Activated CD4-positive, alpha-beta T cell treated with anti-CD3 and anti-CD28 coated beads for 36 hours (primary cell): ENCODE measurements at regions of chr1 and their contacts with region 1.

Region 1: GRCh38 chr1:27872059-27872801 is at the start of gene THEMIS2:
- DNase-seq: peak; percentile 90
- ATAC-seq: peak; percentile 81
- H3K4me3 Mint-ChIP-seq: peak within 1 kb of the TSS; percentile 87
- H3K27ac Mint-ChIP-seq: peak within 1 kb of the TSS; percentile 83
- H3K4me1 Mint-ChIP-seq: peaks cover 36% of the 10 kb centered on the region
- H3K27me3 Mint-ChIP-seq: no peaks in the 10 kb centered on the region
- total RNA-seq, gene THEMIS2: 14.2 to 16.2 TPM

Region 2: DNA sequence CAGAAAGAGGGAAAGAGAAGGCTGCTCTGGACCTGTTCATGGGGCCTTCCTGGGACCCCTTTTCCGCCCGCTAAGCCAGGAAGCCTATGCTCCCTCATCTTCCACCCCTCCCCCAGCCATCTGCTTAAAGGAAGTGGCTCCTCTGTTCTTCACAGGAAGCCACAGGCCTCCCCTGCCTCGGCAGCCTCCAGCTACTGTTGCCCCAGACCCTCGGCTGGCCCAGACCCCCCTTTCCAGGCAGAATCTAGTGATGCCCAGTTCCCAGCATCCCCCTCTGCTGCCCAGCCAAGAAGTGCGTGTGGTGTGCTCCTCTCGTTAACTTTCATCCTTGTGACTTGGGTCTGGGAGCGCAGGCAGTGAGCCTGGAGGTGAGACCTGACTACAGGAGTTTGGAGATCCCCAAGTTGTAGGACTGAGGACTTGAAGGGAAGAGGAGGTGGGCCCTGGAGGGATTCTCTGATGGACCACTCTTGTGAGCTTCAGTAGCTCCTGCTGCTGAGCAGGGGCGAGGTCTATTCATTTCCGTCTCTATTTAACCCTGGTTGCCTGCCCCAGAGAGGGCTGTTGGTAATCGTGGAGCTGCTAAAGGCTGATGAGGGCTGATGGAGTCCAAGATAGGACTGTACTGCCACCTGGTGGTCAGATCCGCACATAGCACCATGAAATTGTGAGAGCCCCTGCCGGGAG is 209.4 kb before region 1 on chr1:
- CTCF ChIA-PET with region 1: no interaction called
- POLR2A ChIA-PET with region 1: no interaction called
- intact Hi-C with region 1: no loop called
- DNase-seq: peak; percentile 94
- ATAC-seq: peak; percentile 84
- H3K4me3 Mint-ChIP-seq: peak overlapping the region; percentile 70
- H3K27ac Mint-ChIP-seq: peak overlapping the region; percentile 98
- H3K4me1 Mint-ChIP-seq: peaks cover 45% of the 10 kb centered on the region
- H3K27me3 Mint-ChIP-seq: no peaks in the 10 kb centered on the region

Region 3: GRCh38 chr1:27816921-27817630 is 55.2 kb before region 1 on chr1:
- CTCF ChIA-PET with region 1: no interaction called
- POLR2A ChIA-PET with region 1: no interaction called
- intact Hi-C with region 1: no loop called
- DNase-seq: no peak
- ATAC-seq: no peak
- H3K4me3 Mint-ChIP-seq: no peak overlapping the region
- H3K27ac Mint-ChIP-seq: no peak overlapping the region
- H3K4me1 Mint-ChIP-seq: no peaks in the 10 kb centered on the region
- H3K27me3 Mint-ChIP-seq: no peaks in the 10 kb centered on the region

Region 4: DNA sequence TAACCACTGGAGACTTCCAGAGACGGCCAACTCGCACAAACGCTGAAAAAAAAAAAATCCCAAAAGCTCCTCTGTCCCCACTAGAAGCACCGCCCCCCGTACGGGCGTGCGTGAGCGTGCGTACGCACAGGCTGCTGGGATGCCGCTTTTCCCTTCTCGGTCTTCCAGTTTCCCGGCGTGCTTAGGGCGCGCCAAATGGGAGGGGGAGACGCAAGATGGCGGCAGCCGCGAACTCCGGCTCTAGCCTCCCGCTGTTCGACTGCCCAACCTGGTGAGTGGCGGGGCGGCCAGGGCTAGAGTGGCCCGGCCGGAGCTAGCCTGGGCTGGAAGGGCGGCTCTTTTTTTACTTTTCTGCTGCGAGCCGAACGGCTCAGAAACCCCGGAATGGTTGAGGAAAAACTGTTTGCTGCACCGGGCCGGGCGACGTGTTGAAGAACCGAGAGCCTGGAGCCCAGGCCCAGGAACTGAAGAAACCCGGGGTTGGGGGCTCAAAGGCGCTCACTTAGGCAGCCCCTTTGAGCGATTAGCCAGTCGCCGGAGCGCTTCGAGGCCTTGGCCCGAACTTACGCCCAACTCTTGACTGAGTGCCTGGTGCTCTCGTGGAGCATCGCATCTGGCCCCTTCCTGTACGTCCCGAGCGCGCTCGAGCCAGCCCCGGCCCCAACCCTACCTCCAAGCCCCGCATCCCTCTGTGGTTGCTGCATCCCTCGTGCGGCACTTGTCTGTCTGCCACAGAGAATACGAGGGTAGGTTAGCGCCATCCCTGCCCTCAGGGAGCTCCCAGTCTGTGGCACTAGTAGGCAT is 41.4 kb before region 1 on chr1 and contains the start of gene PPP1R8:
- CTCF ChIA-PET with region 1: interaction called, 3 read pairs
- POLR2A ChIA-PET with region 1: no interaction called
- intact Hi-C with region 1: loop called in 1 of 2 experiments (anchors 1 kb)
- DNase-seq: peak; percentile 94
- ATAC-seq: peak; percentile 99
- H3K4me3 Mint-ChIP-seq: peak within 1 kb of the TSS; percentile 94
- H3K27ac Mint-ChIP-seq: peak within 1 kb of the TSS; percentile 94
- H3K4me1 Mint-ChIP-seq: peaks cover 40% of the 10 kb centered on the region
- H3K27me3 Mint-ChIP-seq: no peaks in the 10 kb centered on the region
- total RNA-seq, gene PPP1R8: 49.6 to 65.9 TPM